ENCODE measurements at regions of chr2 and their contacts with region 1.

Region 1: DNA sequence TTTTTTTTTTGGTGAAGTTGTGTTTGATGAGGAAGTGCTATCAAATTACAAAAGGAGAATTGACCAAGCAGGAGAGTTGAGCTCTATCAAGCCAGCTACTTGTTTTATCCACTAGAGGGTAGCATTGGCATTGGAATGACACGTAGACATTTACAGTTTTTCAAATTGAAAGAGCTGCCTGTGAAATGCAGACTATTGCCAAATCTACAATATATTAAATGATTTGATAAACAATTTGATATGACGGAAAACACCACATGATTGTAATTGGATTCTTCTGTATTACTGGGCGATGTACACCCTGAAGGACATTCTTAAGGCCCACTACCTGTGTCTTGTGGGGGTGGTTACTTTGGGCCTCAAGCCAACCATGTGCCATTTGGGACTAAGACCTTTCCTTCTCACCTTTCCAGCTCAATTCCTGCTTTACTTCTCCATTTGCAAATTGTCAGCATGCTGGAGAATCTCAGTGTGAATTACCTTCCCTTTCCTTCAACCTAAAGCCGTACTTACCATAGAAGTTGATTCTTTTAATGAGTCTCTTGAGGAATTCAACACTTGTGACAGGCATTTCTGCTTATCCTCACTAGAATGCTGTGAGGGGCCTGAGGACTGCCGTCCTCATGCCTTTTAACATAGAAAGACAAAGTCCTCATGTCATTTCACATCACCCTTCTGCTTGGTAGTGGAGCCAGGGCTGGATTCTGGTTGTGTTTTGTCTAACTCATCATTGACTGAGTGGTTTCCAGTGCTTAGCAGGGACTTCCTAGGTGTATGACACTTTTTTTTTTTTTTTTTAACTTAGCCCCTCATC is 134.8 kb upstream of the THUMPD2 start:
- DNase-seq: no peak
- ATAC-seq: peak; percentile 66 to 69
- H3K4me3 ChIP-seq: no peak overlapping the region
- H3K27ac ChIP-seq: no peak overlapping the region
- H3K4me1 ChIP-seq: no peaks in the 10 kb centered on the region
- H3K27me3 ChIP-seq: no peaks in the 10 kb centered on the region
- CTCF ChIP-seq: peak; percentile 83

Region 2: GRCh38 chr2:40554668-40555285 is 640.9 kb after region 1 on chr2:
- intact Hi-C with region 1: loop called (anchors 10 kb)
- DNase-seq: peak; percentile 46
- ATAC-seq: peak; percentile 81 to 84
- H3K4me3 ChIP-seq: no peak overlapping the region
- H3K27ac ChIP-seq: no peak overlapping the region
- H3K4me1 ChIP-seq: no peaks in the 10 kb centered on the region
- H3K27me3 ChIP-seq: no peaks in the 10 kb centered on the region
- CTCF ChIP-seq: peak; percentile 89

Measured in lower lobe of right lung (tissue), 2 donors.